Activated B cell treated with CpG ODN at 0.5 μM for 24 hours (primary cell): ENCODE measurements at regions of chr9 and their contacts with region 1.

Region 1: GRCh38 chr9:31519011-31519410 is 865.4 kb upstream of the ACO1 start:
- DNase-seq: peak; percentile 16
- ATAC-seq: peak; percentile 77
- H3K4me3 Mint-ChIP-seq: no peak overlapping the region
- H3K27ac Mint-ChIP-seq: no peak overlapping the region
- H3K4me1 Mint-ChIP-seq: peaks cover 21% of the 10 kb centered on the region
- H3K27me3 Mint-ChIP-seq: no peaks in the 10 kb centered on the region
- CTCF ChIP-seq: no peak

Region 2: GRCh38 chr9:31030741-31031202 is 488.2 kb before region 1 on chr9:
- CTCF ChIA-PET with region 1: no interaction called
- POLR2A ChIA-PET with region 1: no interaction called
- intact Hi-C with region 1: no loop called
- DNase-seq: no peak
- ATAC-seq: no peak
- H3K4me3 Mint-ChIP-seq: no peak overlapping the region
- H3K27ac Mint-ChIP-seq: no peak overlapping the region
- H3K4me1 Mint-ChIP-seq: no peaks in the 10 kb centered on the region
- H3K27me3 Mint-ChIP-seq: no peaks in the 10 kb centered on the region
- CTCF ChIP-seq: no peak

Region 3: GRCh38 chr9:31314241-31314640 is 204.8 kb before region 1 on chr9:
- CTCF ChIA-PET with region 1: no interaction called
- POLR2A ChIA-PET with region 1: no interaction called
- intact Hi-C with region 1: no loop called
- DNase-seq: no peak
- ATAC-seq: no peak
- H3K4me3 Mint-ChIP-seq: no peak overlapping the region
- H3K27ac Mint-ChIP-seq: no peak overlapping the region
- H3K4me1 Mint-ChIP-seq: no peaks in the 10 kb centered on the region
- H3K27me3 Mint-ChIP-seq: no peaks in the 10 kb centered on the region
- CTCF ChIP-seq: no peak

Region 4: DNA sequence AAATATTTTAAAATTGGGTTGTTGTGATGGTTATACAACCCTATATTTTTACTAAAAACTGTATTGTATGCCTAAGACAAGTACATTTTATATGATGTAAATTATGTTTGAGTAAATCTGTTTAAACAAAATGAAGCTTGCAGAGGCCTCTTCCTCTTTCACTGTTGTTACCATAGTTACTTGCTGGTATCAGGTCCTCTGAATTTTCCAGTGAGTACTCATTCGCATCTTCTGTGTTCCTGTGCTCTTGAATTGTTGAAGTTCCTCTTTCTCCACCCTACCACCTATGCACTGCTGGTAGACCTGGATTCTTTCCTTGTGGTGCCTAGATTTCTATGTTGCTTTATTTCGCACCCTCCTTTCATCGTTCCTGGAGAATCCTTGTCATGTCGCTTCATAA is 73.1 kb before region 1 on chr9:
- CTCF ChIA-PET with region 1: no interaction called
- POLR2A ChIA-PET with region 1: no interaction called
- intact Hi-C with region 1: loop called (anchors 5 kb)
- DNase-seq: no peak
- ATAC-seq: peak; percentile 91
- H3K4me3 Mint-ChIP-seq: peak overlapping the region; percentile 55
- H3K27ac Mint-ChIP-seq: peak overlapping the region; percentile 81
- H3K4me1 Mint-ChIP-seq: peaks cover 22% of the 10 kb centered on the region
- H3K27me3 Mint-ChIP-seq: no peaks in the 10 kb centered on the region
- CTCF ChIP-seq: no peak